Astrocyte of the cerebellum (primary cell): ENCODE measurements at regions of chr6 and their contacts with region 1.

Region 1: GRCh38 chr6:147782302-147782701 is 273.8 kb downstream of the SAMD5 start:
- DNase-seq: peak; percentile 18
- H3K4me3 ChIP-seq: no peak overlapping the region
- CTCF ChIP-seq: no peak

Region 2: DNA sequence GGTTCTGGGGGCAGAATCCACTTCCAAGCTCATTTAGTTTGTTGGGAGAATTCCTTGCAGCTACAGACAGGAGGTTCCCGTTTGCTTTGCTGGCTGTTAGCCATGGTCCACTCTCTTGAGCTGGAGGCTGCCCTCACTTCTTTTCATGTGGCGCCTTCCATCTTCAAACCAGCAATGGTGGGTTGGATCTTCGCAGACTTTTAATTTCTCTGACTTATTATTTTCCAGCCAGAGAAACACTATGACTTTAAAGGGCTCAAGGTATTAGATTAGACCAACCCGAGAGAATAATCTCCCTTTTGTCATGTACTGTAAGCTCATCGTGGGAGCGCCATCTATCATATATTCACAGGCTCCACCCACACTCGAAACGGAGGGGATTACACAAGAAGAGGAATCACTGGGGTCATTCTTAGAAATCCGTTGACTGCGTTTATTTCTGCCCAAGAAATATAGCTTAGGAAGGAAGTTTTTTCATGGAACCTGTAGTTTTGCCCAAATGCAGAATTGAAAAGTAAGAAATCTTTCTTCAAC is 234.9 kb before region 1 on chr6:
- in situ Hi-C with region 1: loop called (anchors 10 kb)
- DNase-seq: no peak
- H3K4me3 ChIP-seq: no peak overlapping the region
- CTCF ChIP-seq: no peak